Activated T-helper 1 cell treated with anti-CD3 and anti-CD28 coated beads, Interleukin-12 subunit alpha, Interleukin-12 subunit beta, Interleukin-2, Interleukin-4 antibody, amounts not matched to agents 30 ng/mL and 10 ng/mL and 1 ng/mL, durations not matched to agents 14 hours and 24 hours and 36 hours (primary cell): ENCODE measurements at regions of chr12 and their contacts with region 1.

Region 1: GRCh38 chr12:53379389-53380103 is 430 bp upstream of the SP1 start:
- DNase-seq: peak; percentile 99
- H3K4me3 Mint-ChIP-seq: no peak overlapping the region
- H3K27ac Mint-ChIP-seq: no peak overlapping the region
- H3K4me1 Mint-ChIP-seq: peaks cover 37% of the 10 kb centered on the region
- H3K27me3 Mint-ChIP-seq: no peaks in the 10 kb centered on the region

Region 2: GRCh38 chr12:53220801-53221202 is 158.7 kb before region 1 on chr12:
- intact Hi-C with region 1: loop called (anchors 1 kb)
- DNase-seq: peak; percentile 83
- H3K4me3 Mint-ChIP-seq: peak overlapping the region; percentile 94
- H3K27ac Mint-ChIP-seq: peak overlapping the region; percentile 98
- H3K4me1 Mint-ChIP-seq: peaks cover 83% of the 10 kb centered on the region
- H3K27me3 Mint-ChIP-seq: peaks cover 2% of the 10 kb centered on the region

Region 3: DNA sequence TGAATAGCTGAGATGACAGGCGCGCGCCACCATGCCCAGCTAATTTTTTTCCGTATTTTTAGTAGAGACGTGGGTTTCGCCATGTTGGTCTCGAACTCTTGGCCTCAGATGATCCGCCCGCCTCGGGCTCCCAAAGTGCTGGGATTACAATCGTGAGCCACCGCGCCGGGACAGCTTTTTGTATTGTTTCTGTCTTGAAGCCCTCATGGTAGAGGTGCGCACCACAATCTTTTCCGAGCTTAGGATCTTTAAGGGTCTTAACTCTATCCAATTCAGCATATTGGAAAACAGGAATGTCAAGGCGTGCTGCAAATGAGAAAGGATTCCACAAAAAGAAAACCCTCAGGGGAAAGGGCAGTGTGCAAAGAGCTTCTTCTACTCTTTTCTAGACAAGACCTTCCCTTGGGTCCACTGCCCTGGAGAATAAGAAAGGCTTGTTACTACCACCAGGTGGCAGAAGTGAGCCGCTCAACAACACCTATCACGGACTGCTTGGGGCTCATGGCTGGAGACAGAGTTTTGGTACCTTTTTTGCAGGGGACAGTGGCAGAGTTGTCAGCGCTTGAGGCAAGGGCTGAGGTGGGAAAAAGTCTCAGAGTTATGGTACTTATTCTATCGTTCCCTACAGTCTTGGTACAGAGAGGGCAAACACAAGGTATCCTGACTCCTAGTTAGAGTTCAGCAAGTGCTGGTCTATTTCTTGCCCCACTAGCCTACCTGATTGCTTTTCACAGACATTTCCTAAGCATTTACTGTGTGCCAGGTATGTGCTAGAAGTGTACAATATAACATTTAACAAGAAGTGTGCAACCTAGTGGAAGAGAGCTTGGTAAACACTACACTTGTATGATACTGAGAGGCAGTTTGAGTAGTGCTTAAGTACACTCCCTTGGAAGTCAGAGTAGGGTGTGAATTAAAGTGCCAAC is 27.0 kb before region 1 on chr12:
- intact Hi-C with region 1: loop called (anchors 1 kb)
- DNase-seq: peak; percentile 78
- H3K4me3 Mint-ChIP-seq: no peak overlapping the region
- H3K27ac Mint-ChIP-seq: peak overlapping the region; percentile 47
- H3K4me1 Mint-ChIP-seq: peaks cover 10% of the 10 kb centered on the region
- H3K27me3 Mint-ChIP-seq: no peaks in the 10 kb centered on the region

Region 4: DNA sequence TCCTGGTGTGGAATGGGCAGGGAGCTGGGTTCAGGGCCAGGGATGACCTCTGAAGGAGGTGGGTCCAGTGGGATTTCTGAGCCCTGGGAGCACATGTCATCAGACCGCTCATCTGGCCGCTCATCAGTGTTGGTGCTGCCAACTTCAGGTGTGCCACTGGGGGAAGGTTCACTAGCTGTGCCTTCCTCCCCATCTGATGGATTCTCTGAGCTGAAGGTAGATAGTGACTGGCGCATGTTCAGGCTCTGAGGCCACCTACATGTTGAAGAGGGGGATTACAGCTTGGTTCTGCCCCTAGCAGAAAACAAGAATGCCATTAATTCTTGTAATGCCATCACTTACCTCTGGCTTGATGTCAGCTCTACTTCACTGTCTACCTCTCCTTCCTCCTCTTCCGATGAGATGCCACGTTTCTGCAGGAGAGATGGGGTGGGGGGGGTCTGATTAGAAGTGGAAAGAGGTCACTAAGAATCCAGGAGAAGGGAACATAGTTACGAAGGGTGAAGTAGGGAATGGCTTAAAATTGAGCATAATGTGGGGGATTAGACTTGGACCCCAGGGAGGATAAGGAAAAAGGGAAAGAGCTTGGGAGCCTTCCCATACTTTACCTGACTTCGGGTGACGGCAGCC is 102.5 kb after region 1 on chr12:
- intact Hi-C with region 1: no loop called
- DNase-seq: no peak
- H3K4me3 Mint-ChIP-seq: no peak overlapping the region
- H3K27ac Mint-ChIP-seq: no peak overlapping the region
- H3K4me1 Mint-ChIP-seq: no peaks in the 10 kb centered on the region
- H3K27me3 Mint-ChIP-seq: no peaks in the 10 kb centered on the region

Region 5: DNA sequence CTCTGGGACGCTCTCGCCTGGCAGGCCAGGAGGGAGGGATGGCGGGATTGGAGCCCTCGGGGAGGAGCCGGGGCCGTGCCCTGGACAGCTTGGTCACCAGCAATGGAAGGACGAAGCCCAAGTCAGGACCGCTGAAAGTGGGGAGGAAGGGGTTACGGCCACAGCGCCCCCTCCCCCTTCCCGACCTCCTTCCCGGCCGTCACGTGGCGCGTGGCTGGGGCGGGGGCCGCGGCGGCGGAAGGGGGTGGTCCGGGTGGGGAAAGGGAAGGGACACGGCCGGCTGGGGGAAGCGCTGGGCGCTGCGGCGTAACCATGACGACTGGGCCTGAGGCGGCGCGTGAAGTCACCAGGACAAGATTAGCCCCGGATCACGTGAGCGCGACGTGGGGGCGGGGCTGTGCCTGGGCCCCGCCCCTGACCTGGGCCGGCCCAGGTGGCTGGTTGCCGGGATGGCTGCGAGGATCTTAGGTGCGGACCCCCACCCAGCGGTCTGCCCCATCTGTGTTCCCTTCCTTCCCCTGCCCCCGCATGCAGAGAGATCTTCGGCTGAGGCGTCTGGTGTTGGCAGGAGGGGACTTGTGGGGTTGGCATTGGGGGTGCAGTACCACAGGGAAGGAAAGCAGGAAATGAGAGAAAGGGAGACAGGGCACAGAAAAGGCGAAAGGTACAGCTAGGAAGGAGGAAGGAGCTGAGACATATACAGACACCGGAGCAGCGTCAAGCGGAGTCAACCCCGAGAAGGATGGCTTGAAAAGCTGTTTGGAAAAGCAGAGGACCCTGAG is 113.5 kb after region 1 on chr12:
- intact Hi-C with region 1: loop called (anchors 2 kb)
- DNase-seq: peak; percentile 86
- H3K4me3 Mint-ChIP-seq: peak overlapping the region; percentile 86
- H3K27ac Mint-ChIP-seq: peak overlapping the region; percentile 41
- H3K4me1 Mint-ChIP-seq: peaks cover 37% of the 10 kb centered on the region
- H3K27me3 Mint-ChIP-seq: no peaks in the 10 kb centered on the region

Region 6: GRCh38 chr12:53625946-53626701 is 246.6 kb after region 1 on chr12 and contains the start of gene ATF7:
- intact Hi-C with region 1: loop called (anchors 5 kb)
- DNase-seq: peak; percentile 98
- H3K4me3 Mint-ChIP-seq: peak within 1 kb of the TSS; percentile 99
- H3K27ac Mint-ChIP-seq: peak within 1 kb of the TSS; percentile 89
- H3K4me1 Mint-ChIP-seq: peaks cover 36% of the 10 kb centered on the region
- H3K27me3 Mint-ChIP-seq: no peaks in the 10 kb centered on the region
- total RNA-seq, gene ATF7: 21.5 and 25.9 TPM in 2 replicates

Region 7: GRCh38 chr12:53727310-53728041 is 347.9 kb after region 1 on chr12 and contains the start of gene CALCOCO1:
- intact Hi-C with region 1: loop called (anchors 2 kb)
- DNase-seq: peak; percentile 96
- H3K4me3 Mint-ChIP-seq: peak within 1 kb of the TSS; percentile 92
- H3K27ac Mint-ChIP-seq: peak within 1 kb of the TSS; percentile 80
- H3K4me1 Mint-ChIP-seq: peaks cover 26% of the 10 kb centered on the region
- H3K27me3 Mint-ChIP-seq: no peaks in the 10 kb centered on the region
- total RNA-seq, gene CALCOCO1: 17.4 and 19.2 TPM in 2 replicates